SK-MEL-5 (cell line): ENCODE measurements at regions of chr11 and their contacts with region 1.

Region 1: GRCh38 chr11:117796872-117797529 is at the start of gene DSCAML1:
- DNase-seq: no peak
- total RNA-seq, gene DSCAML1: not detected in 2 replicates

Region 2: GRCh38 chr11:117426269-117426685 is 370.7 kb before region 1 on chr11:
- in situ Hi-C with region 1: loop called (anchors 25 kb)
- DNase-seq: peak; percentile 57